ENCODE measurements at regions of chr1 and their contacts with region 1.

Region 1: DNA sequence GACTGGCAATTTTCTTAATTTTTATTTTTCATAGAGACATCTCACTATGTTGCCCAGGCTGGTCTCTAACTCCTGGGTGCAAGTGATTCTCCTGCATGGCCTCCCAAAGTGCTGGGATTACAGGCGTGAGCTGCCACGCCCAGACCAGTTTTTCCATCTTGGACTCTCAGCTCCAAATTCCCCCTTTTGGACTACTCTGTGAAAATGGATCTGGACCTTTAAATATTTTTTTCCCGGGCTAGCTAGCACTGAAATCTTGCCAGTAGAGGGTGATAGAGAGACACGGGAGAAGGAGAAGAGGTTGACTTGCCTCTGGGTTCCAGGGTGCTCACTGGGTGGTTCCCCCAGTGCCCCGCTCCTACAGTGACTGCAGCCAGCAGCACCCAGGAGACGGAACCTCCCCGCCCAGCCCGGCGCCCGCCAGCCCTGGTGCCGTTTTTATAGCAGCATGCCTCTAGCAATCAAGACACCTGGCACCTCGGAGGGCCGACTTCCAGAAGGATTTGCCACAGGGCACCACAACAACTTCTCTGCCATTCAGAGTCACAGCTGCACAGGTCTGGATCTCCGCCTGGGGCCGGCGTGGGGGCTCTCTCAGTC is 34.7 kb upstream of the SCCPDH start:
- DNase-seq: peak; percentile 84
- H3K4me3 ChIP-seq: peak overlapping the region; percentile 18 to 45 (median 36)
- H3K27ac ChIP-seq: peak overlapping the region in 2 of 4 donors; percentile 26 to 58
- H3K4me1 ChIP-seq: peaks cover 0 to 12% (median 10%) of the 10 kb centered on the region in 4 donors
- H3K27me3 ChIP-seq: no peaks in the 10 kb centered on the region
- CTCF ChIP-seq: peak; percentile 48 to 80 (median 72)
- EP300 ChIP-seq: no peak
- POLR2A ChIP-seq: no peak

Region 2: GRCh38 chr1:246724731-246725590 is 35.5 kb after region 1 on chr1:
- intact Hi-C with region 1: loop called (anchors 5 kb)
- DNase-seq: no peak
- H3K4me3 ChIP-seq: peak overlapping the region; percentile 62 to 88 (median 77)
- H3K27ac ChIP-seq: peak overlapping the region; percentile 85 to 92 (median 88)
- H3K4me1 ChIP-seq: peaks cover 0 to 25% (median 6%) of the 10 kb centered on the region in 4 donors
- H3K27me3 ChIP-seq: no peaks in the 10 kb centered on the region
- CTCF ChIP-seq: no peak
- EP300 ChIP-seq: no peak
- POLR2A ChIP-seq: no peak

Region 3: GRCh38 chr1:246753670-246754535 is 64.4 kb after region 1 on chr1:
- intact Hi-C with region 1: loop called (anchors 2 kb)
- DNase-seq: peak; percentile 77
- H3K4me3 ChIP-seq: no peak overlapping the region
- H3K27ac ChIP-seq: peak overlapping the region in 2 of 4 donors; percentile 61 to 62
- H3K4me1 ChIP-seq: peaks cover 0 to 21% (median 14%) of the 10 kb centered on the region in 4 donors
- H3K27me3 ChIP-seq: no peaks in the 10 kb centered on the region
- CTCF ChIP-seq: peak; percentile 57 to 82 (median 69)
- EP300 ChIP-seq: no peak
- POLR2A ChIP-seq: no peak

Region 4: GRCh38 chr1:246773213-246773641 is 83.7 kb after region 1 on chr1:
- intact Hi-C with region 1: no loop called
- DNase-seq: no peak
- H3K4me3 ChIP-seq: no peak overlapping the region
- H3K27ac ChIP-seq: no peak overlapping the region
- H3K4me1 ChIP-seq: peaks cover 0 to 12% (median 3%) of the 10 kb centered on the region in 4 donors
- H3K27me3 ChIP-seq: no peaks in the 10 kb centered on the region
- CTCF ChIP-seq: no peak
- EP300 ChIP-seq: no peak
- POLR2A ChIP-seq: no peak